Activated B cell treated with CpG ODN at 0.5 μM for 24 hours (primary cell): ENCODE measurements at regions of chr3 and their contacts with region 1.

Region 1: GRCh38 chr3:104273046-104273649 is 1093.6 kb upstream of the ALCAM start:
- DNase-seq: no peak
- ATAC-seq: peak; percentile 56
- H3K4me3 Mint-ChIP-seq: no peak overlapping the region
- H3K27ac Mint-ChIP-seq: no peak overlapping the region
- H3K4me1 Mint-ChIP-seq: no peaks in the 10 kb centered on the region
- H3K27me3 Mint-ChIP-seq: no peaks in the 10 kb centered on the region
- CTCF ChIP-seq: peak; percentile 72

Region 2: DNA sequence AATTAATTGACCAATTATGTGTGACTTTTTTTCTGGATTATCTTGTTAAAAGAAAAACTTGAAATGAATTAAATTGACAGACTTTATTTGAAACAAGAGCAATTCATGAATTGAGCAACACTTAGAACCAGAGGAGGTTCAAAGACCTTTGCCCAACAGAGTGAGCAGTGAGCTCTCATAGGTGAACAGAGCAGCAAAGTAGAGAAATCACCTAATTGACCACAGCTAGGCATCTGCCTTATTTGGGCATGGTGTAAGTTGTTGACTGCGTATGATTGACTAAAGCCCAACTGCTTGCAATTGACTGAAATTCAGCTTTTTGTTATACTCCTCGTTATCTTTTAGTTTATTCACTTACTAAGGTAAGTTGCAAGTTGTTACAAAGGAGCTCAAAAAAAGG is 122.4 kb before region 1 on chr3:
- CTCF ChIA-PET with region 1: no interaction called
- POLR2A ChIA-PET with region 1: no interaction called
- intact Hi-C with region 1: no loop called
- DNase-seq: no peak
- ATAC-seq: no peak
- H3K4me3 Mint-ChIP-seq: no peak overlapping the region
- H3K27ac Mint-ChIP-seq: no peak overlapping the region
- H3K4me1 Mint-ChIP-seq: no peaks in the 10 kb centered on the region
- H3K27me3 Mint-ChIP-seq: no peaks in the 10 kb centered on the region
- CTCF ChIP-seq: no peak

Region 3: DNA sequence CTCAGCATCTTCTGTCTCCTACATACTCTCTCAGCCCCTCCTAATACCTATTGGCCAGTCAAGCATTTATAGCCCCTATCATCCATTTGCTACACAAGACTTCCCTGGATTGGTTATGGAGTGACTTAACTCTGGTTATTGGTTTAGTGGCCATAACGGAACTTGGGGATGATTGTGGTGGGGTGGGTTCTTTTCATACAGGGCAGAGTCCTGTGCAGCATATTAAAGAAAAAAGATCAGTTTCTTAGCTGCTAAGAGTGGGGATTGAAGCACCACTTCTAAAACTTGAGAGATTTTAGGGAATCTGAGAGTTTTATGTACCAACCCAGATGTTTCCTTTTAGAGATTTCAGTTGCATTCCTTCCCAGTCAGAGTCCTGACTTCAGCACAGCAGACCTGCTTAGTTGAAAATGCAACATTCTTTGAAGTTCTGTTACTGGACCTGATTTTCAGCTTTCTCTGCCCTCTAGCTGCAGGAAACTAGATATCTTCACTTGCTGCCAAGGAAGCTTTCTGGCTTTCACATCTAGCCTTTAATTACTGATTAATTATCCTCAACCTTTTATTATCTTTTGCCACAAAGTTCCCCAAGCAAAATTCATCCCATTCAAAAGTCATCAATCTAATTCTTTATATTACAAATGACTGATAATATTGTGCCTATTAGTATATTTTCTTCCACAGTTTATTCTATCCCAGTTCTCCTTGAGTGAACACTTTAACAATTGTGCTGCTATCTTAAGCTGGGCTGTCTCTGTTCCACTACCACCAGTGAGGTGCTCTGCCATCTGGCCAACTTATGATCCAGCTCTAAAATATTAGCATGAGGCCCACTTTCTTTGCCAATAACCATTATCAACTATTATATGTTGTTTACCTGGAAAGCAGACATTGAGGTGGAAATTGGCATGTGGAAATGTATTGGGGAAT is 187.6 kb after region 1 on chr3:
- CTCF ChIA-PET with region 1: interaction called, 3 read pairs
- POLR2A ChIA-PET with region 1: no interaction called
- intact Hi-C with region 1: loop called (anchors 5 kb)
- DNase-seq: no peak
- ATAC-seq: no peak
- H3K4me3 Mint-ChIP-seq: no peak overlapping the region
- H3K27ac Mint-ChIP-seq: peak overlapping the region; percentile 15
- H3K4me1 Mint-ChIP-seq: peaks cover 4% of the 10 kb centered on the region
- H3K27me3 Mint-ChIP-seq: no peaks in the 10 kb centered on the region
- CTCF ChIP-seq: no peak

Region 4: DNA sequence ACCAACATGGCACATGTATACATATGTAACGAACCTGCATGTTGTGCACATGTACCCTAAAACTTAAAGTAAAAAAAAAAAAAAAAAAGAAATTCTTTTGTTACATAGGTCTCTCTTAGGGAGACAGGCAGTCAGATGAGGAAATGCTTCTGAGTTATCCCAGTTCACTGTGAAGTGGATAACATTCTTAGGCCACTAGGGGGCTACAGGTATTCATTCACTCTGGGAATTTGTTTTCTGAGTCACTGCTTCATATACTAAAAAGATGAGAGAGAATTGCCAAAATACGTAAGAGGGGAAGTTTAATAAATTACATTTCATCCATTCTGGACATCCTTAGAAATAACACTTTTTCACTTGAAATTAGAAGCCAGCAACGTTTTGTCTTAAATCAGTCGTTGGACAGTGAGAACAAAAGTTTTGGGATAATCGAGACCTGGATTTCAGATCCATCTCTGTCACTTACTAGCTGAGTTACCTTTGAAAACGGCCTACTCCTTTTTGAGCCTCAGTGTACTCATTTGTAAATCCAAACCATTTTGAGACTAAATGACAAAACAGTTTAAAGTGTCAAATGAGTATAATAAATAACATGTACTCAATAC is 355.1 kb after region 1 on chr3:
- CTCF ChIA-PET with region 1: no interaction called
- POLR2A ChIA-PET with region 1: no interaction called
- intact Hi-C with region 1: loop called (anchors 10 kb)
- DNase-seq: no peak
- ATAC-seq: peak; percentile 45
- H3K4me3 Mint-ChIP-seq: no peak overlapping the region
- H3K27ac Mint-ChIP-seq: no peak overlapping the region
- H3K4me1 Mint-ChIP-seq: peaks cover 5% of the 10 kb centered on the region
- H3K27me3 Mint-ChIP-seq: no peaks in the 10 kb centered on the region
- CTCF ChIP-seq: no peak

Region 5: DNA sequence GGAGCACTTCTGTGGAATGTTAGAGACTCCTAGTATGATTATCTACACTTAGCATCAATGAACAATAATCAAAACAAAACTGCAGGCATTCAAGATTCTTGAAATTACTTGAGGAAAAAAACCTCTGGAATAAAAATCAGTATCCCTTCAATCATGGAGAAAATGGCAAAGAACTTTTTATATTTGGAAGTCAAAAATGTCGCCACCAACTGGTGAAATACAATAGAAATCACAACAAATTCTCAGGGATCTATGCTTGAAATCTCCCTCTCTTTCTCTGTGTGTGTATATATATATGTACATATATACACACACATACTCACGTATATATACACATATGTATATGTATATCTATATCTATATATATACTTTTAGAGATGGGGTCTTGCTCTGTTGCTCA is 714.7 kb after region 1 on chr3:
- CTCF ChIA-PET with region 1: no interaction called
- POLR2A ChIA-PET with region 1: no interaction called
- intact Hi-C with region 1: loop called (anchors 5 kb)
- DNase-seq: no peak
- ATAC-seq: no peak
- H3K4me3 Mint-ChIP-seq: no peak overlapping the region
- H3K27ac Mint-ChIP-seq: no peak overlapping the region
- H3K4me1 Mint-ChIP-seq: no peaks in the 10 kb centered on the region
- H3K27me3 Mint-ChIP-seq: no peaks in the 10 kb centered on the region
- CTCF ChIP-seq: no peak

Region 6: GRCh38 chr3:105232553-105232952 is 959.4 kb after region 1 on chr3:
- CTCF ChIA-PET with region 1: no interaction called
- POLR2A ChIA-PET with region 1: no interaction called
- intact Hi-C with region 1: loop called (anchors 10 kb)
- DNase-seq: no peak
- ATAC-seq: no peak
- H3K4me3 Mint-ChIP-seq: no peak overlapping the region
- H3K27ac Mint-ChIP-seq: no peak overlapping the region
- H3K4me1 Mint-ChIP-seq: no peaks in the 10 kb centered on the region
- H3K27me3 Mint-ChIP-seq: peaks cover 6% of the 10 kb centered on the region
- CTCF ChIP-seq: no peak